PC-9 (cell line): ENCODE measurements at regions of chr1 and their contacts with region 1.

Region 1: DNA sequence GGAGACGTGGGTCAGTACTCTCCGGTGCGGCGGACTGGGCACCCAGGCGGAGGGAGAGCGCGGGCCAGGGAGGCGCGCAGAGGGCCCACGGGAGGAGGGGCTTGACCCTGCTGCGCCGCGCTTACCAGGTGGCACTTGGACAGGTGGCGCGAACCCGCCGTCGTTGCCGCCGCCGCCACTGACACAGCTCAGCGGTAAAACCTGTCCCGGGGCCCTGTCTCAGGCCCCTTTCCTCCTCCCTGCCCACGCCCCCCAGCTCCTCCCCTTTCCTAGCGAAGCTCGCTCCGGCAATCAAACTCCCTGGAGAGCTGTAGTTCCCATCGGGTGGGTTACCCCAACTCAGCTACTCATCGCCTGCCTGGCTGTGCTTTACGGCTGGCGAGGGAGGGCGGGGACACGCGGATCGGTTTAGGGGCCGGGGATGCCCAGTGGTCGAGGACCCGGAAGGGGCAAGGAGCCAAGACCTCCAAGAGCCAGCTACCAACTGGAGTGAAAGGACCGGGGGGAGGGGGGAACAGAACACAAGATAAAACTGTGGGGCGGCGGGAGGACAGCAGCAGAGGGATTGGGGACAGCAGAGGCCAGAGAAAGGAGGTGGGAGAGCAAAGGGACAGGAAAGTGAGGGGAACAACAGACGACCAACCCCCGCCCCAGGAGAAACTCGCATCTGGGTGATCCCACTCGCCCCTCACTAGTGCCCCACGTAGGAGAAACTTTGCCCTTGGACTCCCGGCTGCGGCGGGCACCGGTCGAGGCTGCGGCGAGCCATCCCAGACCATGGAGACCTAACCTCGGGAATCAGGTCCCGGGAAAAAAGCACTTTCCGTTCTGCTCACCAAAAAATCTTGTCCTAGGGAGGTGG is 2.9 kb downstream of the GFI1 start:
- DNase-seq: peak; percentile 31 to 44
- H3K4me3 ChIP-seq: peak overlapping the region; percentile 78
- H3K27ac ChIP-seq: no peak overlapping the region
- H3K4me1 ChIP-seq: peaks cover 18% of the 10 kb centered on the region; the same call in 1 of the 2 replicates
- H3K27me3 ChIP-seq: peaks cover 37% of the 10 kb centered on the region; the same call in 1 of the 2 replicates
- CTCF ChIP-seq: no peak

Region 2: DNA sequence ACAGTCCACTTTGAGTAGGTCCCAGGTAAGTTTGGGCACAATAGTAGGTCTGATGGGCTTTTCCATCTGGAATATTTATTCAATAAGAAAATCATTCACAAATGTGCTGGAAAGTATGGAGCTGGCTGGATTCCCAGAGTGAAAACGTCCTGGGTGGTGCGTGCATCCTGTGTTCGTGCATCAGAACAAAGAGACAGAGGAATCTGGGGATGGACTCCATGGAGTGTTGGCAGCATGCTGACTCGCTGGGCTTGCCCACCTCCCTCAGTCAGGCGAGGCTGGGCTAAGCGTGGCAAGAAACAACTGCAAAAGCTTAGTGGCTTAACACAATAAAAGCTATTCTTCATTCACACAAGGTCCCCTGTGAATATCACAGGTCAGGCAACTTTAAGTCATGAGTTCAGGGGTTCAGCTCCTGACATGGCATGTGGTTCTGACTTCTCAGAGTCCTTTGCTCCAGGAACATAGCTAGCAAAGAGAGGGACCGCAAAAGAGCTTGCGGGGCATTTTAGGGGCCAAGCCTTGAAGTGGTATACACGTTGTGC is 1310.4 kb before region 1 on chr1:
- CTCF ChIA-PET with region 1: no interaction called
- POLR2A ChIA-PET with region 1: no interaction called
- intact Hi-C with region 1: no loop called
- DNase-seq: no peak
- H3K4me3 ChIP-seq: no peak overlapping the region
- H3K27ac ChIP-seq: no peak overlapping the region
- H3K4me1 ChIP-seq: no peaks in the 10 kb centered on the region
- H3K27me3 ChIP-seq: peaks cover 8% of the 10 kb centered on the region; the same call in 1 of the 2 replicates
- CTCF ChIP-seq: no peak

Region 3: GRCh38 chr1:92563457-92564216 is 79.8 kb after region 1 on chr1:
- CTCF ChIA-PET with region 1: no interaction called
- POLR2A ChIA-PET with region 1: interaction called, 37 read pairs
- intact Hi-C with region 1: no loop called
- DNase-seq: no peak
- H3K4me3 ChIP-seq: no peak overlapping the region
- H3K27ac ChIP-seq: no peak overlapping the region
- H3K4me1 ChIP-seq: no peaks in the 10 kb centered on the region
- H3K27me3 ChIP-seq: no peaks in the 10 kb centered on the region
- CTCF ChIP-seq: no peak